Psoas muscle (tissue), 8 donors: ENCODE measurements at regions of chr9 and their contacts with region 1.

Region 1: GRCh38 chr9:82606492-82607382 is 456.2 kb downstream of the RASEF start:
- DNase-seq: no peak
- ATAC-seq: peak; percentile 77 to 95 (median 86)
- H3K4me3 ChIP-seq: no peak overlapping the region
- H3K27ac ChIP-seq: no peak overlapping the region
- H3K4me1 ChIP-seq: peaks cover 7% of the 10 kb centered on the region
- H3K27me3 ChIP-seq: no peaks in the 10 kb centered on the region
- CTCF ChIP-seq: peak; percentile 75

Region 2: GRCh38 chr9:81521892-81522291 is 1084.8 kb before region 1 on chr9:
- intact Hi-C with region 1: loop called (anchors 5 to 10 kb)
- DNase-seq: no peak
- ATAC-seq: peak in 3 of 4 donors; percentile 48 to 59 (median 55)
- H3K4me3 ChIP-seq: no peak overlapping the region
- H3K27ac ChIP-seq: no peak overlapping the region
- H3K4me1 ChIP-seq: no peaks in the 10 kb centered on the region
- H3K27me3 ChIP-seq: peaks cover 0 to 2% (median 0%) of the 10 kb centered on the region in 3 donors
- CTCF ChIP-seq: no peak

Region 3: DNA sequence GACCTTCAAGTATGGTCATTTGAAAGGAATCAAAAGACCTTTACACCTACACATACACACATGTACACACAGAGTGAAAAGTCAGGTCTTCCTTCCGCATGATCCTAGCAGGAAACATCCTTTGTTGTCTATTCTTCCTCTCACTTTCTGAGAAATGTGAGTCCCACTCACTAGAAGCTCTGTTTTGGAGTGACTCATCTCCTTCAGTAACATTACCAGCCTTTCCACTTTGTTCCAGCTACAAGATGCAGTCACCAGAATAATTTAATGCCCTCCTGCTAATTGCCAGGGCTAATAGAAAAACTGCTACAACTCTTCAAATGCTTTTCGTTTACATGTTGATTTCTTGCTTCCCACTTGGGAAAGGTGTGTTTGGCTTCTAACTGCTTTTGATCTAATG is 38.9 kb after region 1 on chr9:
- intact Hi-C with region 1: no loop called
- DNase-seq: no peak
- ATAC-seq: no peak
- H3K4me3 ChIP-seq: no peak overlapping the region
- H3K27ac ChIP-seq: no peak overlapping the region
- H3K4me1 ChIP-seq: no peaks in the 10 kb centered on the region
- H3K27me3 ChIP-seq: no peaks in the 10 kb centered on the region
- CTCF ChIP-seq: no peak